ENCODE measurements at regions of chr10 and their contacts with region 1.

Region 1: GRCh38 chr10:89426230-89426868 is 12.0 kb downstream of the IFIT5 start:
- DNase-seq: peak in 1 of 2 experiments; percentile 42
- H3K4me3 ChIP-seq: no peak overlapping the region
- H3K4me3 Mint-ChIP-seq: no peak overlapping the region
- H3K27ac Mint-ChIP-seq: no peak overlapping the region
- H3K4me1 ChIP-seq: peaks cover 14% of the 10 kb centered on the region
- H3K4me1 Mint-ChIP-seq: peaks cover 18% of the 10 kb centered on the region
- H3K27me3 ChIP-seq: no peaks in the 10 kb centered on the region
- H3K27me3 Mint-ChIP-seq: peaks cover 5% of the 10 kb centered on the region
- CTCF ChIP-seq: peak; percentile 62 to 77

Region 2: GRCh38 chr10:89392974-89393373 is 33.4 kb before region 1 on chr10:
- CTCF ChIA-PET with region 1: no interaction called
- POLR2A ChIA-PET with region 1: no interaction called
- intact Hi-C with region 1: loop called (anchors 2 kb)
- DNase-seq: peak; percentile 38 to 40
- H3K4me3 ChIP-seq: no peak overlapping the region
- H3K4me3 Mint-ChIP-seq: peak overlapping the region; percentile 66
- H3K27ac Mint-ChIP-seq: no peak overlapping the region
- H3K4me1 ChIP-seq: peaks cover 9% of the 10 kb centered on the region; the same call in 1 of the 2 replicates
- H3K4me1 Mint-ChIP-seq: peaks cover 9% of the 10 kb centered on the region
- H3K27me3 ChIP-seq: no peaks in the 10 kb centered on the region
- H3K27me3 Mint-ChIP-seq: no peaks in the 10 kb centered on the region
- CTCF ChIP-seq: no peak

Region 3: DNA sequence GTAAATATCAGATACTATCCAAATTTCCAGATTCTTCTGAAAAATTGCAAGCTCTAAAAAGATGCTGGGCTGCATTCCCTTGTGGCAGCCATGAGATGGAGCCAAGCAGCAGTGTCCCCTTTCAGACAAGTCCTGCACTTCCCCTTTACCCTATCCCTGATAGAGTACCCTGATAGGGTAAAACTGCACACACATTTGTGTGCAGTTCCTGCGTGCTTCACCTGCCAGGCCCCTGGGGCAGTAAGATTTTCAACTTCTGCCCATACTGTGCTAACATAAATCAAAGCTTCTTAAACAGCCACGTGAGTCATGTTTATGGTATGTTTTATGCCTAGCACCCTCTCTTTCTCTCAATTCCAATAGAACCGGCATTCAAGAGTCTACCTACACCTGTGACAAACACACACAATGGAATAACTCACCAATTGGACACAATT is 40.3 kb after region 1 on chr10:
- CTCF ChIA-PET with region 1: no interaction called
- POLR2A ChIA-PET with region 1: no interaction called
- intact Hi-C with region 1: loop called (anchors 2 kb)
- DNase-seq: peak; percentile 37 to 40
- H3K4me3 ChIP-seq: no peak overlapping the region
- H3K4me3 Mint-ChIP-seq: no peak overlapping the region
- H3K27ac Mint-ChIP-seq: no peak overlapping the region
- H3K4me1 ChIP-seq: 0 out of 2 replicates have a peak, but pooled peaks cover 10% of the 10 kb centered on the region
- H3K4me1 Mint-ChIP-seq: peaks cover 6% of the 10 kb centered on the region
- H3K27me3 ChIP-seq: no peaks in the 10 kb centered on the region; the same call in 1 of the 2 replicates
- H3K27me3 Mint-ChIP-seq: no peaks in the 10 kb centered on the region
- CTCF ChIP-seq: peak in 1 of 2 experiments; percentile 72

Region 4: DNA sequence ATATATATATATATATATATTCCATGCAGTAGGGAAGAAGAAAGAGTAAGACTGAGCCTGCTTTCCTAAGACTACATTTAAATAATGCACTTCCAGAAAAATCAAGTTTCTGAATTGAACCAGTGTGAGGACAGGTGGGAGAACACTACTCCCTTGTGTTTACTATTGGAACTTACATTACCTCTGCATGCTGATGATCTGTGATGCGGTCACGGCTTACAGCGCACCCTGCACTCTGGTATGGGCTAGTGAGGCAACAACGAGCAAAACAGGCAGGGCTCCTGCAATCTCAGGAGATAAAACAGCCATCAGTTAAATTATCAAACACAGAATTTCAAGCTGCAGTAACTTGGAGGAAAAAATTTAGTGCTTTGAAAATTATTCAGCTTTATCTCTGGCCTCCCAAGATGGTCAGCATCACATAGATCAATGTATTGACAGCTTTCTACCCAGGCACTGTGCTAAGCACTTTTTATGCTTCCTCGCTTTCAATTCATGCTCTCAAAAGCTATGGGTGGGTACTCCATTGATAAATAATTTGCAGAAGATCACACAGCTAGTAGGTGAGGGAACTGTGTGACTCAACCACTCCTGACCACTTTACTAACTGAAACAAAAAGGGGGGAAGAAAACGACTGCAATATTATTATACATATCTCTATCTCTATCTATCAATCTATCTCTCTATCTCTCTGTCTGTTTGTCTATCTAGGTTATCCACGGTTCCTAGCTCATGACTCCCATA is 129.5 kb after region 1 on chr10:
- CTCF ChIA-PET with region 1: no interaction called
- POLR2A ChIA-PET with region 1: no interaction called
- intact Hi-C with region 1: loop called (anchors 2 kb)
- DNase-seq: peak in 1 of 2 experiments; percentile 13
- H3K4me3 ChIP-seq: no peak overlapping the region
- H3K4me3 Mint-ChIP-seq: no peak overlapping the region
- H3K27ac Mint-ChIP-seq: no peak overlapping the region
- H3K4me1 ChIP-seq: peaks cover 12% of the 10 kb centered on the region
- H3K4me1 Mint-ChIP-seq: peaks cover 15% of the 10 kb centered on the region
- H3K27me3 ChIP-seq: no peaks in the 10 kb centered on the region
- H3K27me3 Mint-ChIP-seq: no peaks in the 10 kb centered on the region
- CTCF ChIP-seq: no peak

Region 5: DNA sequence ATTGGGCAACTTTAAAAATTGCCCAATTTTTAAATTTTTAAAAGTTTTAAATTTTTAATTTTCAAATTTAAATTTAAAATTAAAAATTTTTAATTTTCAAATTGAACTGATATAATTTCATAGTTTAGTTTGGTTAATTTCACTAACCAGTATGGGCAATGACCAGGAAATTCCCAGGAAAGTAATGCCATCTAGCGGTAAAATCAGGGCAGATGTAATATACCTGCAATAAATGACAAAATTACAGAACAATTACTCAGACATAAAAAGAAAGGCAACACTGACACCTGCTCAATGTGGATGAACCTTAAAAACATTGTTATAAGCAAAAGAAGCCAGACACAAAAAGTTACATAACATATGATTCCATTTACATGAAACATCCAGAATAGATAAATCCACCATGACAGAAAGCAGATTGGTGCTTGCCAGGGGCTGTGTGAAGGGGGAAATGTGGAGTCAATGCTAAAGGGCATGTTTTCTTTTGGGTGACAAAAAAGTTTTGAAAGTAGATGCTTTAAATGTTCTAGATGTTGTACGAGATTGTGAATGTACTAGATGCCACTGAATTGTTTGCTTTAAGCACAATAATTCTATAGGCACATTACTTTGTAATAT is 137.6 kb after region 1 on chr10:
- CTCF ChIA-PET with region 1: no interaction called
- POLR2A ChIA-PET with region 1: no interaction called
- intact Hi-C with region 1: loop called (anchors 1 kb)
- DNase-seq: peak in 1 of 2 experiments; percentile 43
- H3K4me3 ChIP-seq: no peak overlapping the region
- H3K4me3 Mint-ChIP-seq: no peak overlapping the region
- H3K27ac Mint-ChIP-seq: no peak overlapping the region
- H3K4me1 ChIP-seq: peaks cover 5% of the 10 kb centered on the region; the same call in 1 of the 2 replicates
- H3K4me1 Mint-ChIP-seq: peaks cover 8% of the 10 kb centered on the region
- H3K27me3 ChIP-seq: no peaks in the 10 kb centered on the region
- H3K27me3 Mint-ChIP-seq: peaks cover 3% of the 10 kb centered on the region
- CTCF ChIP-seq: peak; percentile 66

Region 6: DNA sequence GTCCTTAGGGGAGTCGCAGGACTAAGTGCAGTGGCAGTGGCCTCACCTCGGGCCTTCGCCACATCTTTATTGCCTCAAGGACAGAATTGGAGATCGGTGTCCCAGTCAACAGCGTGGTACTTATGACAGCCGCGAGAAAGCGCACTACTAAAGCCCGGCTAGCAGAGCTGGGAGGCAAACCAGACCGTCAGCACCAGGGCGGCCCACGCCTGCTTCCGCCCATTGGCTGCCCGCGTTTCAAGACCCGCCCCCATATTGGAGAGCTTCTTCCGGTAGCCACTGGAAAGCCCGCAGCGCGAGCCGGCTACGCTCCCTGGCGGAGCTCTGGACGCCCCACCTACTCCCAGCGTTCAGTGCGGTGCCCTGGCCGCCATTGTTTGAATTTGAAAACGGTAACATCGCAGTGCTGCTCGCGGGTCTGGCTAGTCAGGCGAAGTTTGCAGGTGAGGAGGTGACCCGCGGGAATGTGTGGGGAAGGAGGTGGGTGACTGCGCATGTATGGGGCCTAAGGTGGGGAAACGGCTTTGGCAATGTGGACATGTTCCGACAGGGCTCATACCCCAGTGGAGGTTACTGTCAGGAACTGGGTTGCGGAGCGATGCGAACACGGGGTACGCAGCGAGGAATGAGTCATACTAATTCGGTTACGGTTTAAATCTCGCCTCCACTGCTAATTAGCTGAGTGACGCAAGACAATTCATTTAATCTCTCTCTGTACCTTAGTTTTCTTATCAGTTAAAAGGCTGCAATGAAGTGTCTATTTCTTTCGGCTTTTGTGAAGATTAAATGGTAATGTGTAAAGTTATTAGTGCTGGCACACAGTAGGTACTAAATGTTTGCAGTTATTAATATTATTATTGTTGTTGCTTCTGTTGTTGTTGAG is 275.1 kb after region 1 on chr10 and contains the start of gene KIF20B:
- CTCF ChIA-PET with region 1: no interaction called
- POLR2A ChIA-PET with region 1: no interaction called
- intact Hi-C with region 1: loop called (anchors 2 kb)
- DNase-seq: peak; percentile 97 to 98
- H3K4me3 ChIP-seq: peak within 1 kb of the TSS; percentile 78
- H3K4me3 Mint-ChIP-seq: peak within 1 kb of the TSS; percentile 88
- H3K27ac Mint-ChIP-seq: peak within 1 kb of the TSS; percentile 89
- H3K4me1 ChIP-seq: peaks cover 6% of the 10 kb centered on the region
- H3K4me1 Mint-ChIP-seq: peaks cover 31% of the 10 kb centered on the region
- H3K27me3 ChIP-seq: no peaks in the 10 kb centered on the region
- H3K27me3 Mint-ChIP-seq: no peaks in the 10 kb centered on the region
- CTCF ChIP-seq: peak in 1 of 2 experiments; percentile 63
- total RNA-seq, gene KIF20B: 43.2 and 43.9 TPM in 2 replicates

Region 7: GRCh38 chr10:89773081-89773480 is 346.7 kb after region 1 on chr10:
- CTCF ChIA-PET with region 1: no interaction called
- POLR2A ChIA-PET with region 1: no interaction called
- intact Hi-C with region 1: loop called (anchors 5 kb)
- DNase-seq: no peak
- H3K4me3 ChIP-seq: no peak overlapping the region
- H3K4me3 Mint-ChIP-seq: no peak overlapping the region
- H3K27ac Mint-ChIP-seq: no peak overlapping the region
- H3K4me1 ChIP-seq: no peaks in the 10 kb centered on the region
- H3K4me1 Mint-ChIP-seq: no peaks in the 10 kb centered on the region
- H3K27me3 ChIP-seq: no peaks in the 10 kb centered on the region
- H3K27me3 Mint-ChIP-seq: no peaks in the 10 kb centered on the region
- CTCF ChIP-seq: no peak

Measured in Caco-2 (cell line).